Activated CD4-positive, alpha-beta memory T cell treated with anti-CD3 and anti-CD28 coated beads for 36 hours (primary cell): ENCODE measurements at regions of chr7 and their contacts with region 1.

Region 1: DNA sequence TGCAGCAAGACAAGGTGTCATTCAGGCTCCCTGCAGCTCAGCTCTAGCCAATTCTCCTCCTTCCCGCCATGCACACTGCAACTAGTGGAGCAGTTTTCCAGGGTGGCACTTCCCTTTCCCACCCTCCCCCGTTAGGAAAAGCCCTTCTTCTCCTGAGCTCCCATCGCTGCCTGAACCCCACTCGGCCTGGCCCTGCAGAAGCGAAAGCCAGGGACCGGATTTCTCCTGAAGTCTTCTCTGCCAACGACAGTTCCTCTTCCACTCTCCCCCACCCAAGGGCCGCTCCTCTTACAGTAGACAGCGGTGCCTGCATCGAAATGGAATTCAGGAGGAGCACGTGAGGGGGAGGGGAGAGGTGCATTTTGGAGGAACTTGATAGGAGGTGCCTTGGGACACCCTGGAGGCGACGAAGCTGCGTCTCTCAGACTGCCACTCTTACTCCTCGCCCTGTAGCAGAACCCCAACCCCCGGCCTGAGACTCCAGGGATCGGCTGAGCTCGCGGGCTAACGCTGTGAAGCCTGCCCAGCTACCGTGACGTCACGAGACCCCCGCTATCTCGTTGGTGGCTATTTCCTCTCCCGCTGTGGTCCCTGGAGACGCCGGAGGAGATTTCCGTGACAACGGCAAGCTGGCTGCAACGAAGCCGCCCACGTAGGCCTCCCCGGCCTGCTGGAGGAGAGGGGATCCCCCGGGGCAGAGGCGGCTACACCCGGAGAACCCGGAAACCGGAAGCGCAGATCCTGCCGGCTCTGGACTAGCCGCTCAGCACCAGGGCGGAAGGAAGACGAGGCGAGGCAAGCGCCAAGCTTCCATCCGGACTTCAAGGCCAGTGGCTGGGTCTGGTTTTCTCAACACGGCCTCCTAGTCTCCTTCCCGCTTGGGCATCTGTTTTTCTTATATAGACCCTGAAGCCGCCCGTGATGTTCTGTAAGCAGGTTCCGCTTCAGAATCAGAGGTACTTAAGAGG is 109.7 kb downstream of the RALA start:
- DNase-seq: peak; percentile 98
- H3K4me3 Mint-ChIP-seq: peak overlapping the region; percentile 88
- H3K27ac Mint-ChIP-seq: peak overlapping the region; percentile 75
- H3K4me1 Mint-ChIP-seq: peaks cover 33% of the 10 kb centered on the region
- H3K27me3 Mint-ChIP-seq: no peaks in the 10 kb centered on the region

Region 2: DNA sequence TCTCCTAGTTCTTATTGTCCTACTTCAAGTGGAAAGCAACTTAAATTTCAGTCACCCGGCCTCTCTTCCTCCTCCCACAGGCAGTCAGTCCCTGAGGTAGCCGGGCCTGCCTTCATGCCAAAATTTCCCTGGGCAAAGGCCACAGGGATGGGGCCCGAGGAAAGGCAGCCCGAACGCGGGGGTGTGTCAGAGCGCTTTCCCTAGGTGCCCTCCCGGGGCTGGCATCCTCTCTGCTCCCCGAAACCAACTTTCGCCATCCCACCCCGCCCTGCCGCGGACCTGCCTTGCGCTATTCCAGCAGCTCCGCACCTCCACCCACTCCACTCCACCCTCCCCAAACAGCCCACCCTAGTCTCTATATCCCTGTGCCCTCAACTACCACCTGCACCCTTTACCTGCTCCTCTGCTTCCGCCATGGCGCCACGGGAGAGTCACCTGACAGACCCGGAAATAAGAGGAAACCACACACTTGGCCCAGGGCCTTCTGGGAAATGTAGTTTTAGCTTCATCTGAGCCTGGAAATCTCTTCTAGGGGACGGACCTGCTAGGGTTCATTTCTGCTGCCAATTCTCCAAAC is 824.3 kb before region 1 on chr7 and contains the start of gene VPS41:
- CTCF ChIA-PET with region 1: no interaction called
- POLR2A ChIA-PET with region 1: no interaction called
- intact Hi-C with region 1: loop called (anchors 10 kb)
- DNase-seq: peak; percentile 86
- H3K4me3 Mint-ChIP-seq: peak within 1 kb of the TSS; percentile 91
- H3K27ac Mint-ChIP-seq: peak within 1 kb of the TSS; percentile 68
- H3K4me1 Mint-ChIP-seq: peaks cover 37% of the 10 kb centered on the region
- H3K27me3 Mint-ChIP-seq: no peaks in the 10 kb centered on the region
- total RNA-seq, gene VPS41: 62.9 to 66.8 TPM

Region 3: DNA sequence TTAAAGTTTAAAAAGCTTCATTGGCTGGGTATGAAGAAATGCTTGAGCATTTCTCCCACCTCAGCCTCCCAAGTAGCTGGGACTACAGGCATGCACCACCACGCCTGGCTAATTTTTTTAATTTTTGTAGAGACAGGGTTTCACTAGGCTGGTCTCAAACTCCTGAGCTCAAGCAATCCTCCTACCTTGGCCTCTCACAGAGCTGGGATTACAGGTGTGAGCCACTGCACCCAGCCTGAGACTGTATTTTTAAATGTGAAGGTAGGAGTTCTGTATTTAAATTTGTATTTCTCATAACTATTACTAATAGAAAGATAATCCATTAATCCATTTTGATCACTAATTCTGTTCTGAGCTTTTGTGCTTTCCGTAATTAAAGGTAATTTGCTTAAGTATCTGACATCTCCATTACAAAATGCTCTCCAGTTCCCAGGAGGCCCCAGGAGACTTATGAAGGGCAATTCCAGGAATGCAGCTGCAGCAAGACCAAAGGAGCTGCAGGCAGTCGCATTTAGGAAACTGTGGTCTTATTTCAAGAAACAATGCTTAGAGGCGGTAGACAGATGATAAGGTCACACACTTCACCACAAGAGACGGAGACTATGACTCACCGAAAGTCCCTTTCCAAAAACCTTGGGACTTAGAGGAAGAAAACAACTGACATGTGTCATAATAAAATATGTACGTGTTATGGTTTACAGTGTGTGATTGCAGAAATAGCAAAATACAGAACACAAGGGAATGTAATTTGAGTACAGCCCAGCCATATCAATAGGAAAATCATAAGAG is 143.6 kb before region 1 on chr7:
- CTCF ChIA-PET with region 1: interaction called, 3 read pairs
- POLR2A ChIA-PET with region 1: no interaction called
- intact Hi-C with region 1: loop called (anchors 1 kb)
- DNase-seq: peak; percentile 85
- H3K4me3 Mint-ChIP-seq: peak overlapping the region; percentile 20
- H3K27ac Mint-ChIP-seq: peak overlapping the region; percentile 34
- H3K4me1 Mint-ChIP-seq: peaks cover 38% of the 10 kb centered on the region
- H3K27me3 Mint-ChIP-seq: no peaks in the 10 kb centered on the region

Region 4: DNA sequence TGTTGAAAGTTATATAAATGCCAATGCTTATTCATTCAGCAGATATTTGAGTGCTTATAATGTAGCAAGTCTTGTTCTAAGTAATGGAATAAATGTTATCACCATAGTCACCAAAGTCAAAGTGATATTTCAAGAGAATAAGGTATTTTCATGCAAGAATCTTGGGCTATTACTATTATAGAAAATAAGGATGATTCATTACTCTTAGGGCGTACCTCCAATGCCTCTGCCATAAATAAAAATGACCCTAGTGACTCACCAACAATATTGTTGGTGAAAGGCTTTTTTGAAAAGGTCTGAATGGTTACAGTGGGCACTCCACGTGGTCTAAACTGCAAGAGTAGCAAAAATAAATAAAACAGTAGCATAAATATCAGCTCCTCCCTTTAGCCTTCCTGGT is 41.3 kb before region 1 on chr7:
- CTCF ChIA-PET with region 1: no interaction called
- POLR2A ChIA-PET with region 1: no interaction called
- intact Hi-C with region 1: loop called (anchors 2 kb)
- DNase-seq: no peak
- H3K4me3 Mint-ChIP-seq: no peak overlapping the region
- H3K27ac Mint-ChIP-seq: no peak overlapping the region
- H3K4me1 Mint-ChIP-seq: peaks cover 11% of the 10 kb centered on the region
- H3K27me3 Mint-ChIP-seq: no peaks in the 10 kb centered on the region

Region 5: DNA sequence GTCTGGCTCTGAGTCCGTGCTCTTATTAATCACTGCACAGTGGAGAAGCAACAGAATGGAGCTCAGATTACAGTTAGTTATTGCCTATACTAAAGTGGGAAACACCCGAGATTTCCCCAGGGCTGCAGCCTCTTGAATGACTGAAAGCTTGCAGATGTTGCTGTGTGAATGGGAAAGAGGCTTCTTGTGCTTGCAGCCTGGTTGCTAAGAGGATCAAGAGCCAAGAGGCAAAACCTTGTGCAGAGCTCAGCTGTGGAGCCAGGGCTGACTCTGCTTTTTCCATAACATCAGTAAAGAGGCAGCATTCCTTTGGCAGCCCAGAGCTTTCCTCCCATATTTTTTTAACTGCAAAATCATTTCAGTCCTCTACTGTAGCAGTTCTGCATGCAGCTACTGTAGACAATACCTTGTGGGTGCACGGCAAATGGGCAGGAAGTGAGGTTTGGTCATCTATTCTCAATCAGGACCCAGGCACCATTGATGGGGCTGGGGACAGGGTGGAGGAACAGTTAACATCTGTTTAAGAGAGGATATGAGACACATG is 23.3 kb before region 1 on chr7:
- CTCF ChIA-PET with region 1: no interaction called
- POLR2A ChIA-PET with region 1: no interaction called
- intact Hi-C with region 1: no loop called
- DNase-seq: no peak
- H3K4me3 Mint-ChIP-seq: no peak overlapping the region
- H3K27ac Mint-ChIP-seq: no peak overlapping the region
- H3K4me1 Mint-ChIP-seq: no peaks in the 10 kb centered on the region
- H3K27me3 Mint-ChIP-seq: no peaks in the 10 kb centered on the region

Region 6: DNA sequence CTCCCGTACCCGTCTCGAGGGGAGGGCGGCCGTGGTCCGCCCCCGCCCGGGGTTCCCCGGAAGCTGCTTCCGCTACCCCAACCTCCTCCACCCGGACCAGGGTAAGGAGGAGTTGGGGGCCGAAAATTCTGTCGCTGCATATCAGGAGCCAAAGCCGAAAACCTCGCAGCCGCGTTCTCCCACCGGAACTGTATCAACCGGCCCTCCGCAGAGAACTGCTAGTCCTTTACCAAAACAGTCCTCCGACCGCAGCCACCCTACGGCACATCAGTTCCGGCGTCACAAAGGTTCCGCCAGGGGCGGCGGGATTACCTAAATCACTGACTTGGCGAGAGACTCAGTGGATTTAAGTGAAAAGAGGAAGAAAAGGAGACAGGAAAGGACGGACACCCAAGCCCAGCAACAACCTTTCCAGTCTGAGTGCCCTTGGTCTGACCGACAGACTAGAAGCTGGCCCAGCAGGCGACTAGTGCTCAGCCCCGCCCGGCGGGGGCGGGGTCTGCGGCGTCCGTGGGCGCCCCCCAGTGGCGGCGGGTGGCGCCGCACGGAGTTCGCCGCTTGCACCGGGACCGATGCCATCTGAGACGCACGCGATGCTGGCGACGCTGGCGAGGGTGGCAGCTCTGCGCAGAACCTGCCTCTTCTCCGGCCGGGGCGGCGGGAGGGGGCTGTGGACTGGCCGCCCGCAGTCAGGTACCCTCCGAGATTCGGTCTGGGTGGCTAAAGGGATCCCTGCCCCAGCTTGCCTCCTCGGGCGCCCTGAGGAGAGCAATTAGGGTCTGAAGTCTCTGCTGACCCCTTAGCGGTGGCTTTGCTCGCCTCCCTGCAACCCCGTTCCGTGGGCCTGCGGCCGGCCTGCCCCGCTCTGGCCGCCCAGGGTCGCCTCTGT is 401.6 kb after region 1 on chr7 and contains the starts of genes MPLKIP and SUGCT:
- CTCF ChIA-PET with region 1: no interaction called
- POLR2A ChIA-PET with region 1: no interaction called
- intact Hi-C with region 1: loop called (anchors 1 kb)
- DNase-seq: peak; percentile 88
- H3K4me3 Mint-ChIP-seq: peak within 1 kb of the TSS; percentile 92
- H3K27ac Mint-ChIP-seq: peak within 1 kb of the TSS; percentile 97
- H3K4me1 Mint-ChIP-seq: peaks cover 22% of the 10 kb centered on the region
- H3K27me3 Mint-ChIP-seq: peaks cover 6% of the 10 kb centered on the region
- total RNA-seq, gene MPLKIP: 34.6 to 34.7 TPM
- total RNA-seq, gene SUGCT: 0.76 to 1.5 TPM